Dorsolateral prefrontal cortex (tissue), 120 donors: ENCODE measurements at regions of chr15 and their contacts with region 1.

Region 1: GRCh38 chr15:77514635-77515402 is 94.1 kb downstream of the HMG20A start:
- DNase-seq: no peak
- H3K4me3 ChIP-seq: no peak overlapping the region
- H3K27ac ChIP-seq: peak overlapping the region in 45 of 59 donors; percentile 2 to 80 (median 56)
- H3K27me3 ChIP-seq: no peaks in the 10 kb centered on the region
- CTCF ChIP-seq: no peak

Region 2: DNA sequence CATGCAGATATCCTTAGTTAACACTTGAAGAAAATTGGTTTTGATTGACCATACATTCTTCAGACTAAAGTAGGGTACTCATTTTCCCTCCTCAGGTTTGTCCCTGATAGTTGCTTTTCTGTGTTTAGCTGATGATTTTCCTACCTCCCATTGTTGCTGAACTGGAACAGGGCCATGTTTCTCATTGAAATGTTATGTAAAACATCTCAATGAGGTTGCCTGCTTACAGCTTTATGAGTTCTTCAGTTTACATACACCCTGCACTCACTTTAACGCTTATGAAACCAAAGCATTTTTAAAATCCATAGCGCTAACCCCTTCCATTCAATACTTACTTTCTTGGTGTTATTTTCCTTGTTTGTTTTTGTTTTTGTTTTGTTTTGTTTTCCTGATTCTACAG is 32.2 kb before region 1 on chr15:
- intact Hi-C with region 1: no loop called
- DNase-seq: no peak
- H3K4me3 ChIP-seq: no peak overlapping the region
- H3K27ac ChIP-seq: peak overlapping the region in 2 of 59 donors; percentile 7 to 44
- H3K27me3 ChIP-seq: no peaks in the 10 kb centered on the region
- CTCF ChIP-seq: no peak

Region 3: DNA sequence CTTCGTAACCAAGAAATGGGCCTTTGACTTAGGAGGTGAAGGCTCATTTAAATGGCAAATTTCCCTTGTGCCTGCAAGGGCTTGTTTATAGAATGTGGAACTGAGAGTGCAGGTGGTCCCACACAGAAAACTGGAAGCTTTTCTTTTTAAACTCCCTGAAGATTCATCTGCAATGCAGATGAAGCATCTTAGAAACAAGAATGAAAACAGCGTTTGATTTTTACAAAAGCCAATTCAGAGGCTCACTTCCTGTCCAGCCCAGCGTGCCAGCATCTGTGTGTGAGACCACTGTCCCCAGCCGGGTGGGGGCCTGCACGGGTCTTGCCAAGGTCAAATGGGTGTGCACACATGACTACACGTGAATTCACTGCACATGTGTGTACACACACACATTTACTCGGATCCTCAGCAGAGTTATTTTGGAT is 23.2 kb after region 1 on chr15:
- intact Hi-C with region 1: loop called in 1 of 2 experiments (anchors 2 kb)
- DNase-seq: peak in 5 of 10 donors; percentile 58 to 72 (median 65)
- H3K4me3 ChIP-seq: peak overlapping the region in 2 of 59 donors; percentile 2 to 41
- H3K27ac ChIP-seq: peak overlapping the region; percentile 13 to 98 (median 88)
- H3K27me3 ChIP-seq: no peaks in the 10 kb centered on the region
- CTCF ChIP-seq: peak in 4 of 56 donors; percentile 10 to 25 (median 15)